Activated T-helper 1 cell treated with anti-CD3 and anti-CD28 coated beads, Interleukin-12 subunit alpha, Interleukin-12 subunit beta, Interleukin-2, Interleukin-4 antibody, amounts not matched to agents 30 ng/mL and 10 ng/mL and 1 ng/mL, durations not matched to agents 14 hours and 24 hours and 36 hours (primary cell): ENCODE measurements at regions of chr5 and their contacts with region 1.

Region 1: GRCh38 chr5:177133091-177133852 is at the start of gene NSD1:
- DNase-seq: peak; percentile 90
- H3K4me3 Mint-ChIP-seq: peak within 1 kb of the TSS; percentile 93
- H3K27ac Mint-ChIP-seq: peak within 1 kb of the TSS; percentile 86
- H3K4me1 Mint-ChIP-seq: peaks cover 48% of the 10 kb centered on the region
- H3K27me3 Mint-ChIP-seq: no peaks in the 10 kb centered on the region
- total RNA-seq, gene NSD1: 108 and 112 TPM in 2 replicates

Region 2: DNA sequence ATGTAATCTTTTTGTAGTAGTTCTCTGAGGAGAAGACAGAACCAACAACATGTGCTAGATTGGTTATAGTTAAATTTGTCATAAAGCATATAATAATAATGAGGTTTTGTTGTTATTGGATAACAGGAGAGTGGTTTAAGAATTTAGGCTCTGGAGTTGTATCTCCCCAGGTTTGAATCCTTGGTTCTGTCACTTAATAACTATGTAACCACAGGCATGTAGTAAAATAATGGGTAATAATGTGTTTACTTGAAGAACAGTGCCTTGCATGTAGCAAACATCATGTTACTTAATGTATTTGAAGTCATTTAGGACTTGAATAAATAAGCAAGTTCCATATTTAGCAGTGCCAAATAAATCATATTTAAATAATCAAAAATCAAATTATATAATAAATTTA is 56.1 kb after region 1 on chr5:
- intact Hi-C with region 1: loop called (anchors 5 kb)
- DNase-seq: no peak
- H3K4me3 Mint-ChIP-seq: no peak overlapping the region
- H3K27ac Mint-ChIP-seq: no peak overlapping the region
- H3K4me1 Mint-ChIP-seq: peaks cover 6% of the 10 kb centered on the region
- H3K27me3 Mint-ChIP-seq: no peaks in the 10 kb centered on the region

Region 3: DNA sequence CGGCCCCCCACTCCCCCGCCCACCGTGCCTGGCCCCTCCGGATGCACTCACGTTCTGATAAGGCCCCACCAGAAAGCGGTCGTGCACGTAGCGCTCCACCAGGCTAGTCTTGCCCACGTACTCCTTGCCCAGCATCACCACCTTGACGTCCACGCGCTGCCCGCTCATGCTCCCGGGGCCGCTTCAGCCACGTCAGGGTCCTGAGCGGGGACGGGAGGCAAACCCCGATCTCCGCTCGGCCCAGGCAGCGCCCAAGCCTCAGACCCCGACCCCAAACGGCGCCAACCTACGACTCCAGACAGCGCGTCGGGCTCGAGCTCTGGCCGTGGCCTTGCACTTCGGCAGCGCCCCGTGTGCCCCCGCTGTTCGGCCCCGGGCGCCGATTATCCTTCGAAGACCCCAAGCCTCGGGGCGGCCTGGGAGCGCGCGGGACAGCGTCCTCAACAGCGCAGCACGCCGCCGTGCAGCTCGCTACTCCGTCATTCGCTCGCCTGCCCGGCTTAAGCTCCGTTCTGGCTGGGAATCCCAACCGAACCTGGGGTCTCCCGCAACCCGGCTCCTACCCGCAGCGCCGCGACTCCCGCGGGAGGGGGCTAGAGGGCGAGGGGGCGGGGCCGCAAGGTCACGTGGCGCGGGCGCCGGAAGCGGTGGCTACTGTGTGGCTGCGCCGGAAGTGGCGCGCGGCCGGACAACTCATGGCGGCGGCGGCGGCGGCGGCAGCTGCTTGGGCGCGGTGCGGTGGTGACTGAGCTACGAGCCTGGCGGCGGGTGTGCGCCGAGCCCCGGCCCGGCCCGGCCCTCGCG is 170.1 kb after region 1 on chr5 and contains the starts of genes PRELID1 and RAB24:
- intact Hi-C with region 1: loop called (anchors 2 kb)
- DNase-seq: peak; percentile 86
- H3K4me3 Mint-ChIP-seq: peak within 1 kb of the TSS; percentile 93
- H3K27ac Mint-ChIP-seq: peak within 1 kb of the TSS; percentile 84
- H3K4me1 Mint-ChIP-seq: peaks cover 75% of the 10 kb centered on the region
- H3K27me3 Mint-ChIP-seq: no peaks in the 10 kb centered on the region
- total RNA-seq, gene PRELID1: 239 and 250 TPM in 2 replicates
- total RNA-seq, gene RAB24: 19.7 and 22.4 TPM in 2 replicates

Region 4: GRCh38 chr5:177357459-177358351 is 224.4 kb after region 1 on chr5 and contains the start of gene RGS14:
- intact Hi-C with region 1: loop called (anchors 5 kb)
- DNase-seq: peak; percentile 63
- H3K4me3 Mint-ChIP-seq: peak within 1 kb of the TSS; percentile 85
- H3K27ac Mint-ChIP-seq: peak within 1 kb of the TSS; percentile 80
- H3K4me1 Mint-ChIP-seq: peaks cover 63% of the 10 kb centered on the region
- H3K27me3 Mint-ChIP-seq: no peaks in the 10 kb centered on the region
- total RNA-seq, gene RGS14: 37.8 and 41.3 TPM in 2 replicates